ENCODE measurements at regions of chr11 and their contacts with region 1.

Region 1: GRCh38 chr11:832321-833113 is at the start of gene CD151:
- DNase-seq: peak in 1 of 2 experiments; percentile 72
- H3K4me3 ChIP-seq: peak within 1 kb of the TSS; percentile 81
- H3K4me3 Mint-ChIP-seq: peak within 1 kb of the TSS; percentile 79
- H3K27ac Mint-ChIP-seq: peak within 1 kb of the TSS; percentile 71
- H3K4me1 ChIP-seq: peaks cover 34% of the 10 kb centered on the region
- H3K4me1 Mint-ChIP-seq: peaks cover 17% of the 10 kb centered on the region
- H3K27me3 ChIP-seq: no peaks in the 10 kb centered on the region
- H3K27me3 Mint-ChIP-seq: no peaks in the 10 kb centered on the region
- CTCF ChIP-seq: no peak
- total RNA-seq, gene CD151: 268 and 302 TPM in 2 replicates

Region 2: GRCh38 chr11:819129-819931 is 13.2 kb before region 1 on chr11:
- CTCF ChIA-PET with region 1: interaction called, 10 read pairs
- POLR2A ChIA-PET with region 1: interaction called, 33 read pairs
- intact Hi-C with region 1: loop called (anchors 1 kb)
- DNase-seq: peak; percentile 92 to 95
- H3K4me3 ChIP-seq: peak overlapping the region; percentile 86
- H3K4me3 Mint-ChIP-seq: peak overlapping the region; percentile 76
- H3K27ac Mint-ChIP-seq: peak overlapping the region; percentile 66
- H3K4me1 ChIP-seq: peaks cover 21% of the 10 kb centered on the region
- H3K4me1 Mint-ChIP-seq: no peaks in the 10 kb centered on the region
- H3K27me3 ChIP-seq: no peaks in the 10 kb centered on the region
- H3K27me3 Mint-ChIP-seq: no peaks in the 10 kb centered on the region
- CTCF ChIP-seq: peak; percentile 8 to 23

Region 3: DNA sequence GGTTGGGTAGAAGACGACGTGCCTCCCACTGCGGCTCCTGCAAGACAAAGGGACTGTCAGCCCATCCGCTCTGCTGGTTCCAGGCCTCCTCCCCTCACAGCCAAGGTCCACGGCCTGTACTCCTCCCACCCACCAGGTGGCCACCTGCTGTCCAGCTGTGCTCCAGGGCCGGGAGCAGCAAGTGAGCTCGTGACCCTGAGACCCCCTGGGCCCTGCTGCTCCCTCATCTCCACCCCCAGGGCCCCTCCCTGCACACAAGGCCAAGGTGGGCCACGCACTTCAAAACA is 37.6 kb after region 1 on chr11:
- CTCF ChIA-PET with region 1: no interaction called
- POLR2A ChIA-PET with region 1: no interaction called
- intact Hi-C with region 1: no loop called
- DNase-seq: peak in 1 of 2 experiments; percentile 61
- H3K4me3 ChIP-seq: no peak overlapping the region
- H3K4me3 Mint-ChIP-seq: no peak overlapping the region
- H3K27ac Mint-ChIP-seq: no peak overlapping the region
- H3K4me1 ChIP-seq: no peaks in the 10 kb centered on the region
- H3K4me1 Mint-ChIP-seq: no peaks in the 10 kb centered on the region
- H3K27me3 ChIP-seq: no peaks in the 10 kb centered on the region
- H3K27me3 Mint-ChIP-seq: no peaks in the 10 kb centered on the region
- CTCF ChIP-seq: peak; percentile 40 to 71

Measured in Caco-2 (cell line).